Activated CD4-positive, alpha-beta memory T cell treated with anti-CD3 and anti-CD28 coated beads, Interleukin-2, amount 10 ng/mL, durations not matched to agents 7 days and 5 days (primary cell): ENCODE measurements at regions of chr9 and their contacts with region 1.

Region 1: DNA sequence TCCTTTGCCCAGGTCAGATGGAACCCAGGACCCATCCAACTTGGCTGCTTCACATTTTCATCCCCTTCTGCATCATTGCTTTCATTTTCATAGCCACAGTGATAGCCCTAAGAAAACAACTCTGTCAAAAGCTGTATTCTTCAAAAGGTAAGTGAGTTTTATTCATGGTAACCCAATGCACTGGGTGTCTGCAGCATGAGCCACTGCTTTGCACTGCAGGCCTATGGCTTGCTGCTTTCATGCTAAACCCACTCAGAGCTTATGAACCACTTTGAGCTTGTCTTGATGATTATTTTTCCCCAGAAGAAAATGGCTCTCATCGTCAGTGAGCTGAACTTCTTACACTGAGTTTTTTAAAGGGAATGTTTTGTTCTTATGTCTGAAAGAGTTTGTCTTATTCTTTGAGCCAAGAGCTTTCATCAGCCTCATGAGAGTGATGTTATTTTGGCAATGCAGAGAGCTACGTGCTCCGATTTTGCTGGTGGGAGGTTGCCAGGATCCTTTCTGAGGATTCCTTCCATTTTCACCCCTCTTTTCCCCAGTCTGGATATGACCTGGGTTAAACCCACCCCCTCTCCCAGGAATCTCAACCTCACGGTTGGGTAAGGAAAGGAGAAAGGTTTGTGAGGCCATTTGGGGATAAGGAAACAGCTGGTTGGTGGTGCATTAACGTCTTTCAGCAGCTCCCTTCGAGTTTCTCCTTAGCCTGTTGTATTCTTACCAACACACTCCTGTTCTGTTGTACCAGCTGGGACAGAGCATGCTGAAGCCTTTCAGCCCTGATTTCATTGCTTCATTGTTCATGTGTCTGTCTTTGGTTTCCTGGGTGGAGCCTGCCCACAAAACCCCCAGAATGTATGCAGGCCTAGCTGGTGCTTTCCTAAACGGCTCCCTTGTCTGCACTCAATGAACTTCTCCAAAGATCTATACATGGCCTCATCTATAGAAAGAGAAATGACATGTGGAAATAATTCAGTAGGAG is 47.6 kb downstream of the PDCD1LG2 start:
- DNase-seq: peak; percentile 77
- H3K4me3 Mint-ChIP-seq: peak overlapping the region; percentile 12
- H3K27ac Mint-ChIP-seq: peak overlapping the region; percentile 78
- H3K4me1 Mint-ChIP-seq: peaks cover 41% of the 10 kb centered on the region
- H3K27me3 Mint-ChIP-seq: no peaks in the 10 kb centered on the region

Region 2: DNA sequence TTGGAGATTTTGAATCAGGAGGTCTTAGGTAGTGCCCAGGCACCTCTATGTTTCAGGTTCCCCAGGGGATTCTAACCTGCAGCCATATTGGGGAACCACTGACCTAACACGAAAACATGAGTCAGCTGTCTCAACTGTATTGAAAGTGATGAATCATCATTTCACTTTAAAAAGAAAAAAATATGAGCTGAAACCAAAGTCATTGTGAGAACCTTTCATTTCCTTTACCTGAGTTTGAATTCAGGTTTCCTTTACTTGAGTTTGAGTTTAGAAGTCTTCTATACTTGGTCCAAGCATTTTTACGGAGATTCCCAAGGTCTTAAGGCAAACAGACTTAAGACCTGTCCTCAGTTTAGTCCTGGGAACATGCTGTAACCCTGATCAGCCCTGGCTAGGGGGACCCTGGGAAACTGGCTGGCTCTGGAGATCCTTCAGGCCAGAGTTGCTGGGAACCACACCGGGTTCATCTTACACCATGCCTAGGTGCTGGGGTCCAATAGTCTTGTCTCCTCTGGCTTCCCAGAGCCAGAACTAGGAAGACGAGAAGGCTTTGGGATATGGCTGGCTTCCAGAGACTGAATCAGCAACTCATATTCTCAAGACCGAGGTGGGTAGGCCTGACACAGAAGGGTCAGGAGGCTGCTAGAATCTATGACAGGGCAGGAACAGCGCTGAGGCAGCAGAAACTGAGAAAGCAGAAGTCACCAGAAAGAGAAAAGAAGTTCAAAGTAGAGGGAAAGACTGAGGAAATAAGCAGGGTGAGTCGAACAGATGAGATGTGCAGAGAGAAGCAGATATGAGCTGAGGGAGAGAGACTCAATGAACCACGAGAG is 64.0 kb before region 1 on chr9:
- CTCF ChIA-PET with region 1: interaction called, 3 read pairs
- POLR2A ChIA-PET with region 1: interaction called, 10 read pairs
- DNase-seq: peak; percentile 38
- H3K4me3 Mint-ChIP-seq: no peak overlapping the region
- H3K27ac Mint-ChIP-seq: peak overlapping the region; percentile 64
- H3K4me1 Mint-ChIP-seq: peaks cover 20% of the 10 kb centered on the region
- H3K27me3 Mint-ChIP-seq: no peaks in the 10 kb centered on the region

Region 3: GRCh38 chr9:5582835-5583195 is 24.9 kb after region 1 on chr9:
- CTCF ChIA-PET with region 1: interaction called, 3 read pairs
- POLR2A ChIA-PET with region 1: interaction called, 12 read pairs
- DNase-seq: peak; percentile 53
- H3K4me3 Mint-ChIP-seq: no peak overlapping the region
- H3K27ac Mint-ChIP-seq: no peak overlapping the region
- H3K4me1 Mint-ChIP-seq: peaks cover 65% of the 10 kb centered on the region
- H3K27me3 Mint-ChIP-seq: no peaks in the 10 kb centered on the region